ENCODE measurements at regions of chrX and their contacts with region 1.

Region 1: GRCh38 chrX:2401590-2402360 is 99.0 kb downstream of the DHRSX start:
- DNase-seq: peak; percentile 46 to 61
- ATAC-seq: peak; percentile 86 to 93 (median 90)
- H3K4me3 ChIP-seq: peak overlapping the region; percentile 44
- H3K27ac ChIP-seq: peak overlapping the region; percentile 78
- H3K4me1 ChIP-seq: peaks cover 7% of the 10 kb centered on the region
- H3K27me3 ChIP-seq: no peaks in the 10 kb centered on the region
- CTCF ChIP-seq: no peak

Region 2: GRCh38 chrX:1411291-1411720 is 990.5 kb before region 1 on chrX:
- intact Hi-C with region 1: no loop called
- DNase-seq: no peak
- ATAC-seq: peak in 3 of 4 donors; percentile 10 to 35 (median 35)
- H3K4me3 ChIP-seq: no peak overlapping the region
- H3K27ac ChIP-seq: no peak overlapping the region
- H3K4me1 ChIP-seq: no peaks in the 10 kb centered on the region
- H3K27me3 ChIP-seq: no peaks in the 10 kb centered on the region
- CTCF ChIP-seq: no peak

Region 3: DNA sequence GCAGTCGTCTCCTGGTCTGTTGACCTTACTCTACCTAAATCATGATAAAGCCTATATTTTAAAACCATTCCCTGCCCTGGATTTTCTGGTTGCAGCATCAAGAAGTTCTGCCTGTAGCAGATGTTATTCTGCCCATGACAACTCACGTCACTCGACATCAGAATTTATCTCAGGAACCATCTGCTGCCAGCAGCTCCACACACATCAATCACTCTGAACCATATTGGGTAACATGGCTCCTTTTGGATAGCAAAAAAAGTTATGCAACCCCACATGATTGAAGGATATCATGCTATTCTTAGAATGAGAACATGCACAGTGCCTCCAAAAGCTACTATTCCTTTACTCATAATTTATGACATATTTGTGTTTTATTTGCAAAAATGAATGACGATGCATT is 242.4 kb before region 1 on chrX:
- intact Hi-C with region 1: no loop called
- DNase-seq: no peak
- ATAC-seq: peak in 3 of 4 donors; percentile 77 to 95 (median 93)
- H3K4me3 ChIP-seq: no peak overlapping the region
- H3K27ac ChIP-seq: no peak overlapping the region
- H3K4me1 ChIP-seq: no peaks in the 10 kb centered on the region
- H3K27me3 ChIP-seq: no peaks in the 10 kb centered on the region
- CTCF ChIP-seq: no peak

Region 4: GRCh38 chrX:2500267-2501075 is 98.7 kb after region 1 on chrX and contains the starts of genes DHRSX and ZBED1:
- intact Hi-C with region 1: loop called in 1 of 2 experiments (anchors 10 kb)
- DNase-seq: peak; percentile 47 to 66
- ATAC-seq: peak; percentile 61 to 68 (median 64)
- H3K4me3 ChIP-seq: peak within 1 kb of the TSS; percentile 85
- H3K27ac ChIP-seq: peak within 1 kb of the TSS; percentile 90
- H3K4me1 ChIP-seq: peaks cover 14% of the 10 kb centered on the region
- H3K27me3 ChIP-seq: no peaks in the 10 kb centered on the region
- CTCF ChIP-seq: no peak
- total RNA-seq, gene DHRSX: 9.6 to 19.3 (median 12.7) TPM
- total RNA-seq, gene ZBED1: 28.7 to 63.1 (median 36.3) TPM

Measured in psoas muscle (tissue), 8 donors.